Mammary epithelial cell (primary cell): ENCODE measurements at regions of chr11 and their contacts with region 1.

Region 1: DNA sequence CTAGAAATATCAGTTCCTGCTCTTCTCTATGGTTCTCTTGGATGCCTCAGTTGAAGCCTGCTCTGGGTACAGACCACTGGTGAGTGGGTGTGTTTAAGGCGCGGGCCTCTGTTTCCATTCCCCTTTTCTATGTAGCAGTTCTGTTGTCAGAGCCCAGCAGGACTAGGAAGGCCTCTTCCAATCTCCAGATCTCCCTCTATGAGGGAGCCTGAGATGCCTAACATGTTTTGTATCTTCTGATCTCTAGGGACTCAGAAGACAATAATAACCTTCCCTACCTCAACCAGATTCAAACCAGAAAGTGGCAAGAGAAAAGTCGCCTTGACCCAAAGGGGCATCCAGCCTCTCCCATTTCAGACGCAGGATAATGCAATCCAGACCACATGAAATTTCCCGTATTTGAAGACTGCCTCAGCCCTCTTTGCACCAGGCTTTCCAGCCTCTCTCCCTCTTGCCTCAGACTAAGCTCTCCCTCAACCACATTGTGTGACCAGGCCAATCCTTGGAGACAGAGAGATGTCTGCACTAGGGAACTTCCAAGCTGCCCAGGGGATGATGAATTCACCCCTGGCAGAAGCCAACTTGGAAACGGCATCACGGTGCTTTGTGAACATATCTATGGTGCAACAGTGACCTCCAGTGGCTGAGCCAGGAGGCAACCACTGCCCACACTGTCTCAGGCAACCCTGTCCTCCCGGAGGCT is 150.1 kb upstream of the UBASH3B start:
- DNase-seq: peak; percentile 84
- H3K4me3 ChIP-seq: no peak overlapping the region
- H3K27ac ChIP-seq: no peak overlapping the region
- H3K4me1 ChIP-seq: no peaks in the 10 kb centered on the region
- H3K27me3 ChIP-seq: peaks cover 2% of the 10 kb centered on the region
- CTCF ChIP-seq: peak; percentile 93 to 97

Region 2: GRCh38 chr11:121023848-121024751 is 1481.4 kb before region 1 on chr11 and contains the start of gene TBCEL:
- CTCF ChIA-PET with region 1: no interaction called
- dilution Hi-C with region 1: no loop called
- in situ Hi-C with region 1: no loop called
- intact Hi-C with region 1: no loop called
- DNase-seq: peak; percentile 45
- H3K4me3 ChIP-seq: peak within 1 kb of the TSS; percentile 66 to 84 (median 68)
- H3K27ac ChIP-seq: peak within 1 kb of the TSS; percentile 21
- H3K4me1 ChIP-seq: peaks cover 11% of the 10 kb centered on the region
- H3K27me3 ChIP-seq: no peaks in the 10 kb centered on the region
- CTCF ChIP-seq: no peak
- total RNA-seq, gene TBCEL: 13.7 to 23.5 TPM

Region 3: DNA sequence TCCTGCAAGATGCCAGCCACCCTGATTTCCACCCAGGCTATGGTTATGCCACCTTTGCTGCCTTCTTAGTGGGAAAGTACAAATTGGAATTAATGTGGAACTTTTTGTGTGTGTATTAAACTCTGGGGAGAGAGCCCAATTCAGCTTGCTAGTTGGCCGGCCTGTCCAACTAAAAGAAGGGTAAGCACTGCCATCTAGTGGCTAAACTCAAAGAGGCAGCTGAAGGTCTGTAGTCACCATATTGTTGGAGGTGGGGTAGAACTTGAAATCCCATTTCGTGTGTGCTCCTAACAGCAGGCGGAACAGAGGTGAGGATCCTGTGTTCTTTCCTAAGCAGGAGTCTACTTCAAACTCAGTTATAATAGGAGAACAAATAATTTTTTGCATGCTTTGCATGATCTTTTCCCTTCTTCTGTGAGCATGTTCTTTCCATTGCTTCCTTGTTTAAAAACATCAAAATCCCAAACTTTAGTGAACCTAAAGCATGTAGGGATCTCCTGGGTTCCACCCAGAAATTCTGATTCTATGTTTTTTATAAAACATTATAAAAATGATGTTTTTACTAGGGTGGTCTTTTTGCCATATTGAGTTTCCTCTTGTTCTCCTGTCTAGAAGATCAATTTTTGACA is 913.9 kb before region 1 on chr11:
- CTCF ChIA-PET with region 1: no interaction called
- dilution Hi-C with region 1: no loop called
- in situ Hi-C with region 1: no loop called
- intact Hi-C with region 1: loop called (anchors 1 kb)
- DNase-seq: peak; percentile 65
- H3K4me3 ChIP-seq: no peak overlapping the region
- H3K27ac ChIP-seq: no peak overlapping the region
- H3K4me1 ChIP-seq: peaks cover 16% of the 10 kb centered on the region
- H3K27me3 ChIP-seq: no peaks in the 10 kb centered on the region
- CTCF ChIP-seq: peak; percentile 82

Region 4: DNA sequence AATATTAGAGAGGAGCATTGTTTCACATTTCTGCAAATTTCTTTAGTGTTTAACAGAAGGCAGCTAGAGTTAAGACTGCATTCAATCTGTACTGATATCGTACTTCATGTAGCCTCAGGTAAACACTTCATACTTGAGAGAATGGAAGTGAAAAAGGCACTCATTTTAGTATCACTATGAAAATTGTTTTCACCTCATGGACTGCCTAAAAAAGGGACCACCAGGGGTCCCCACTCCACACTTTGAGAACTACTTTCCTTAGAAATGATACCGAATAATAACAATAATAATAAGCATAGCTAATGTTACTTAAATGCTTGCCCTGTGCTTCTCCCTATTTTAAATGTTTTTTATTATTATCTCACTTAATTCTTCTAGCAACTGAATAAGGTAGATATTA is 484.6 kb before region 1 on chr11:
- CTCF ChIA-PET with region 1: no interaction called
- dilution Hi-C with region 1: no loop called
- in situ Hi-C with region 1: no loop called
- intact Hi-C with region 1: loop called (anchors 5 kb)
- DNase-seq: no peak
- H3K4me3 ChIP-seq: no peak overlapping the region
- H3K27ac ChIP-seq: no peak overlapping the region
- H3K4me1 ChIP-seq: no peaks in the 10 kb centered on the region
- H3K27me3 ChIP-seq: no peaks in the 10 kb centered on the region
- CTCF ChIP-seq: peak; percentile 26 to 36

Region 5: GRCh38 chr11:122209619-122210366 is 295.7 kb before region 1 on chr11:
- CTCF ChIA-PET with region 1: interaction called, 6 read pairs
- dilution Hi-C with region 1: no loop called
- in situ Hi-C with region 1: loop called in 1 of 2 experiments (anchors 5 kb)
- intact Hi-C with region 1: no loop called
- DNase-seq: no peak
- H3K4me3 ChIP-seq: no peak overlapping the region
- H3K27ac ChIP-seq: no peak overlapping the region
- H3K4me1 ChIP-seq: peaks cover 8% of the 10 kb centered on the region
- H3K27me3 ChIP-seq: no peaks in the 10 kb centered on the region
- CTCF ChIP-seq: no peak

Region 6: DNA sequence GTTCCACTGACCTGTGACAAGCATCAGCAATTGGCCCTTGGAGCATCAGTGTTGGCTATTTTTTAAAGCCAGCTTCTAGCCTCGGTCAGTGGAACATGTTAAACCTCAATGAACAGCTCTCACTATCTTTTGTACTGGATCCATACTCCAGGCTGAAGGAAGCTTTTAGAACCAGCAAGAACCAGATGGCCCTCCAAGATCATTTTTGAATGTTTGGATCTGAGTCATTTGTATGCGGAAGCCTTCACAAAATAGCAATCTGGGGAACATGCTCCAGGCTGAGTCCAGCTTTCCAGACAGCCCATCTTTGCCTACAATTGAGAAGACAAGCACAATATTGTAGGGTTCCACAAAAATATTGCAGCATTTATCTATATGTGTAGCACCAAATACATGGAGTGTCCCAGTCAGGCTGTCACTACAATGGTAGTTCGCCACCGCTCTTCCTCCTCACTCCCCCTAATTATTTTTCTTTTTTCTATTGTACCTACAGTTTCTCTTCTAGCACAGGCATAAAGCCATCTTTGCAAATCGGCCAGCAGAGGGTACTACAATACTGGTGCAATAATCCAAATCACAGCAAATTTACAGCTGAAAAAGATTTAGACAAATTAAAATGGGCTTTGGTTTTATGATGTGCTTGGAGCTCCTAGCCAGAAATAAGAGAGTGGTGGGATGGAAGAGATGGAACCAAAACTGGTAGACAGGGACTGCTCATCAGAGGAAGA is 212.0 kb before region 1 on chr11:
- CTCF ChIA-PET with region 1: no interaction called
- dilution Hi-C with region 1: no loop called
- in situ Hi-C with region 1: no loop called
- intact Hi-C with region 1: loop called (anchors 1 kb)
- DNase-seq: peak; percentile 5
- H3K4me3 ChIP-seq: no peak overlapping the region
- H3K27ac ChIP-seq: no peak overlapping the region
- H3K4me1 ChIP-seq: no peaks in the 10 kb centered on the region
- H3K27me3 ChIP-seq: peaks cover 4% of the 10 kb centered on the region
- CTCF ChIP-seq: peak; percentile 25 to 51